ENCODE measurements at regions of chr12 and their contacts with region 1.

Region 1: DNA sequence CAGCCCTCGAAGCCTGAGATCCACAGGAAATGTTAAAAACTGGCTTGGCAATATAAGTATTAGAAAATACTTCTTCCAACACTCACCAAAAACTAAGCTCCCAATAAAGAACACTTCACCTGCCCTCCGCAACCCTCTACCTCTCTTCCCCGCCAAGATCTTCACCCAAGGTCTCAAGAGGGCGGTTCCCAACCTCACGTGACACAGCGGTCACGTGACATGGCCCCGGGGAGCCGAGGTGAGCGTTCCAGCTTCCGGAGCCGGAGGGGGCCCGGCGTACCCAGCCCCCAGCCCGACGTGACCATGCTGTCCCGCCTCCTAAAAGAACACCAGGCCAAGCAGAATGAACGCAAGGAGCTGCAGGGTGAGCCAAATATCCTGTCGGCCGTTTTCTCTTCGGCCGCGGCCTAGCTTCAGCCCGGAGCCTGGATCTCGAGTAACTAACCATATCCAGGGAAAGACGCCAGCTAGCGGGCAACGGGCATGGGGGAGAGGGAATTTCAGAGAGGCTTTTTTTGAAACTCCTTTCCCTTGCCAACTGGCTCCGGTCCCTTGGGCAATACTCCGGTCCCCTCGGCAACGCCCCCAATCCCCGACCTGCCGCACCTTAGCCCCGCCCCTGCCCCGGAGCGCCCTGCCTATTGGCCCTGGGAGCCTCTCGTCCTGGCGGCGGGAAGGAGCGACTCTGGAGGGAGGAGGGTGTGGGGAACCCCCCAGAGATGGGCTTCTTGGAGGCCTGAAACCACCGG is at the start of gene BLOC1S1:
- DNase-seq: peak; percentile 80 to 96 (median 92)
- ATAC-seq: peak; percentile 96
- H3K4me3 ChIP-seq: peak within 1 kb of the TSS; percentile 84 to 90
- H3K4me3 Mint-ChIP-seq: peak within 1 kb of the TSS; percentile 94
- H3K27ac ChIP-seq: peak within 1 kb of the TSS; percentile 67 to 93
- H3K27ac Mint-ChIP-seq: peak within 1 kb of the TSS; percentile 90
- H3K4me1 ChIP-seq: peaks cover 23% of the 10 kb centered on the region
- H3K4me1 Mint-ChIP-seq: peaks cover 36% of the 10 kb centered on the region
- H3K27me3 ChIP-seq: no peaks in the 10 kb centered on the region
- H3K27me3 Mint-ChIP-seq: no peaks in the 10 kb centered on the region
- CTCF ChIP-seq: no peak
- total RNA-seq, gene BLOC1S1: 29.4 to 29.6 TPM

Region 2: GRCh38 chr12:54411391-54412241 is 1304.4 kb before region 1 on chr12:
- CTCF ChIA-PET with region 1: no interaction called
- POLR2A ChIA-PET with region 1: no interaction called
- intact Hi-C with region 1: loop called in 1 of 2 experiments (anchors 5 kb)
- DNase-seq: peak in 7 of 9 experiments; percentile 36 to 74 (median 65)
- ATAC-seq: peak; percentile 39
- H3K4me3 ChIP-seq: peak overlapping the region in 1 of 2 experiments; percentile 82
- H3K4me3 Mint-ChIP-seq: peak overlapping the region; percentile 76
- H3K27ac ChIP-seq: peak overlapping the region; percentile 92 to 98
- H3K27ac Mint-ChIP-seq: peak overlapping the region; percentile 97
- H3K4me1 ChIP-seq: peaks cover 61% of the 10 kb centered on the region
- H3K4me1 Mint-ChIP-seq: peaks cover 72% of the 10 kb centered on the region
- H3K27me3 ChIP-seq: no peaks in the 10 kb centered on the region
- H3K27me3 Mint-ChIP-seq: no peaks in the 10 kb centered on the region
- CTCF ChIP-seq: no peak

Region 3: DNA sequence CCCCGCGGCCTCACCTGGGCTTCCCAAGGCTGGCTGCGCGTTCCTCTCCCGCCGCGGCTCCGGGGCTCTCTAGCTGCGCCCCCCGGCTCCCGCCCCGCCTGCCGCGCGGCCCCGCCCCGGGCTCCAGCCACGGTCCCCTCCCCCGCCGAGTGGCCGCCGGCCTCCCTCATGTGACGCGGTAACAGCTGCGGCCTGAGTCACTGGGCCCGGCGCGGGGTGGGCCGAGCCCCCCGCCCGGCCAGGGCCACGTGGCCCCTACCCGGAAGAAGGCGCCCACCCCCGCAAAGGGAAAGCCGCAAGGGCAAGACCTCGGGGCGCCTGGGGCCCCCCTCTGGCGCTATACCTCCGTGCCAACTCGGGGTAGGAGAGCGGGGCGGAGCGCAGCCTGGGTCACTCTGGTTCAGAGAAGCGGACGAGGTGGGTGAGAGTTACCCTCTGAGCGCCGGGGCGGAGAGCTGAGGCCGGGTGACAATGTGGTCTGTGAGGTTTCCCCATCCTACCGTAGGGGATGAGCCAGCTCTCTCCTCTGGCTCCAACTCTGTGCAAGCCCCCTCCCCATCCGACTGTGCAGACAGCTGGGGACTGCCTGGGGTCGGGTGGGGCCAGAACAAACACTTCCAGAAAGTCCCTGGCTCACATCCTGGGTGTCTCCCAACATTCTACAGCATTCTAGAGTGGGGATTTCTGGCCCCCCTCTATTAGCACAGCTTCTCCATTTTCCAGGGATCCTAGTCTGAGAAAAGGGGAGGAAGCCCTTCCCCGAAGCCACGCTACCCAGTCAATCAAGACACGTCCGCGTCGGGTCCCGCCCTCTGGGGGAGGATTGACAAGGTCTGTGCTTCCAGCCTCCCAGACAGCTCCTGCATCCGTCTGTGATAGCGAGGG is 13.2 kb after region 1 on chr12 and contains the start of gene CD63:
- CTCF ChIA-PET with region 1: interaction called, 176 read pairs
- POLR2A ChIA-PET with region 1: interaction called, 16 read pairs
- intact Hi-C with region 1: loop called in 1 of 2 experiments (anchors 1 kb)
- DNase-seq: peak in 8 of 9 experiments; percentile 42 to 76 (median 61)
- ATAC-seq: peak; percentile 56
- H3K4me3 ChIP-seq: peak within 1 kb of the TSS; percentile 60 to 68
- H3K4me3 Mint-ChIP-seq: peak within 1 kb of the TSS; percentile 86
- H3K27ac ChIP-seq: peak within 1 kb of the TSS; percentile 45 to 83
- H3K27ac Mint-ChIP-seq: peak within 1 kb of the TSS; percentile 90
- H3K4me1 ChIP-seq: peaks cover 31% of the 10 kb centered on the region
- H3K4me1 Mint-ChIP-seq: peaks cover 48% of the 10 kb centered on the region
- H3K27me3 ChIP-seq: no peaks in the 10 kb centered on the region
- H3K27me3 Mint-ChIP-seq: no peaks in the 10 kb centered on the region
- CTCF ChIP-seq: no peak
- total RNA-seq, gene CD63: 27.0 to 33.8 TPM

Region 4: GRCh38 chr12:55829967-55830600 is 114.1 kb after region 1 on chr12:
- CTCF ChIA-PET with region 1: no interaction called
- POLR2A ChIA-PET with region 1: interaction called, 3 read pairs
- intact Hi-C with region 1: loop called in 1 of 2 experiments (anchors 1 kb)
- DNase-seq: peak in 7 of 9 experiments; percentile 15 to 63 (median 48)
- ATAC-seq: peak; percentile 16
- H3K4me3 ChIP-seq: peak overlapping the region; percentile 65 to 93
- H3K4me3 Mint-ChIP-seq: peak overlapping the region; percentile 99
- H3K27ac ChIP-seq: peak overlapping the region; percentile 71 to 79
- H3K27ac Mint-ChIP-seq: peak overlapping the region; percentile 95
- H3K4me1 ChIP-seq: peaks cover 45% of the 10 kb centered on the region
- H3K4me1 Mint-ChIP-seq: peaks cover 56% of the 10 kb centered on the region
- H3K27me3 ChIP-seq: no peaks in the 10 kb centered on the region
- H3K27me3 Mint-ChIP-seq: no peaks in the 10 kb centered on the region
- CTCF ChIP-seq: no peak

Region 5: DNA sequence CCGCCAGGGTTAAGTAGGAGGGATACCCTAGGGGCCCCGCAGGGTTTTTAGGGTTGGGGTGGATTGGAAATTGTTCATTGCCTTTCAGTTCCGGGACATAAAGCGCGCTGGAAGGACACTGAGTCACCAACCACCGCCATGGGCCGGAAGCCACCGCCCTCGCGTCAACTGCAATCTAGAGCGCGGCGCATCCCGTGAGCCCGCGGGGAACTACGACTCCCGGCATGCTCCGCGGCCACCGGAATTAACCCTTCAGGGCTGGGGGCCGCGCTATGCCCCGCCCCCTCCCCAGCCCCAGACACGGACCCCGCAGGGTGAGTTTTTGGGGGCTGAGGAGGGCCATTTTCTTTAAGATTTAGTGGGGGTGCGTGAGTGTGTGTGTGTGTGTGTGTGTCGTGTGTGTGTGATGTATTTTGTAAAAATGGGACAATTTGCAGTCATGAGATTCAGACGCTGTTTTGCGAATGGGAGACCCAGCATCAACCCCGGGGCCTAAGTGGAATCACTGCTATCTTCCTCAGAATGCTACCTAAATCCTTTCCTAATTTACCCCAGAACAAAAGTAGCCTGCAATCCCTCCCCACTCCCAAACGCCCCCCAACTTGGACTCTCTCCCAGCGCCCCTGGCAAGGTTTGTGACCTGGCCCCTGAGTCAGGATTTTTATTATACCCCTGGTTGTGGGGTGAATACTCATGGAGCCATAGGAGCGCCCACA is 436.5 kb after region 1 on chr12 and contains the start of gene MYL6B:
- CTCF ChIA-PET with region 1: no interaction called
- POLR2A ChIA-PET with region 1: no interaction called
- intact Hi-C with region 1: loop called in 1 of 2 experiments (anchors 1 kb)
- DNase-seq: peak; percentile 80 to 96 (median 93)
- ATAC-seq: peak; percentile 90
- H3K4me3 ChIP-seq: peak within 1 kb of the TSS; percentile 65 to 95
- H3K4me3 Mint-ChIP-seq: peak within 1 kb of the TSS; percentile 90
- H3K27ac ChIP-seq: peak within 1 kb of the TSS; percentile 75 to 90
- H3K27ac Mint-ChIP-seq: peak within 1 kb of the TSS; percentile 99
- H3K4me1 ChIP-seq: peaks cover 30% of the 10 kb centered on the region
- H3K4me1 Mint-ChIP-seq: peaks cover 29% of the 10 kb centered on the region
- H3K27me3 ChIP-seq: no peaks in the 10 kb centered on the region
- H3K27me3 Mint-ChIP-seq: no peaks in the 10 kb centered on the region
- CTCF ChIP-seq: no peak
- total RNA-seq, gene MYL6B: 4.0 to 5.9 TPM

Region 6: DNA sequence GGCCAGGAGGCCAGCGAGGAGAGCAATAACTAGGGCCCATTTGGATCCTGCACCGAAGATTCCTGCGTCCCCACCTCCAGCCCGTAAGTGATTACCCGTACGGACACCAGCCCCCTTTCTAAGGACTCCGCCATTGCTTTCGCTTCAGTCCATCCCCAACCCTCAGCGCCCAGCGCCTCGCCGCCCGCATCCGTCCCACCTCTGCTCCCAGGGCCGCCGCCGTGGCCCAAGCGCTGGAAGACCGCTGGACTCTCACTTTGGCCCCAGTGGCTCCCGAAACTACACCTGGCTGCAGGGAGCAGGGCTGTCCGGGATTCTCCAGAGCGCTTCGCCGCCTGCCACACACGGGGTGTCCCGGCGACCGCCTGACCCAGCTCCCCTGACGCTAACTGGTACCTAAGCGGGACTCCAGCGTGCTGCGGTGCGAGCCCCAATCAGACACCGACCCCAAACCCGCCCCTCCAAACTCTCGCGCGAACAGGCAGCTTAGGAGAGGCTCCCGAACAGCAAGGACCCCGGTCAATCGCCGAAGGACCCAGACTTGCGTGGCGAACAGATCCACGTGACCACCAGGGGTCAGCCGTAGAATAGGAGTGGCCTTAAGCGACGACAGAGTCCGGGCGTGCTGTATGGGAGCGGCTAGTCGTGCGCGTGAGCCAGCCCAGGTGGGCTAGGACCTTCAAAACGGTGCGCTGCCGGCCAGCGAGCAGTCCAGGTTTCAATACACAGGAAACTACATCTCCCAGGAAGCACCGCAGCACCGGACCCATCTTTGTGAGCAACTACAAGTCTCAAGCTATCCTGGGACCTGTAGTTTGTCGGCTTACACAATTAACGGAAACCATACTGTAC is 599.8 kb after region 1 on chr12 and contains the start of gene CNPY2:
- CTCF ChIA-PET with region 1: no interaction called
- POLR2A ChIA-PET with region 1: no interaction called
- intact Hi-C with region 1: loop called in 1 of 2 experiments (anchors 1 kb)
- DNase-seq: peak; percentile 89 to 97 (median 95)
- ATAC-seq: peak; percentile 92
- H3K4me3 ChIP-seq: peak within 1 kb of the TSS; percentile 86 to 99
- H3K4me3 Mint-ChIP-seq: peak within 1 kb of the TSS; percentile 99
- H3K27ac ChIP-seq: peak within 1 kb of the TSS; percentile 70 to 98
- H3K27ac Mint-ChIP-seq: peak within 1 kb of the TSS; percentile 98
- H3K4me1 ChIP-seq: peaks cover 10% of the 10 kb centered on the region
- H3K4me1 Mint-ChIP-seq: peaks cover 16% of the 10 kb centered on the region
- H3K27me3 ChIP-seq: no peaks in the 10 kb centered on the region
- H3K27me3 Mint-ChIP-seq: no peaks in the 10 kb centered on the region
- CTCF ChIP-seq: no peak
- total RNA-seq, gene CNPY2: 23.5 to 33.9 TPM

Measured in CD8-positive, alpha-beta T cell (primary cell).